Activated B cell treated with CpG ODN at 0.5 μM for 24 hours (primary cell): ENCODE measurements at regions of chr1 and their contacts with region 1.

Region 1: GRCh38 chr1:1406817-1407635 is at the start of gene MRPL20:
- DNase-seq: peak; percentile 92
- ATAC-seq: peak; percentile 93
- H3K4me3 Mint-ChIP-seq: peak within 1 kb of the TSS; percentile 92
- H3K27ac Mint-ChIP-seq: peak within 1 kb of the TSS; percentile 89
- H3K4me1 Mint-ChIP-seq: peaks cover 38% of the 10 kb centered on the region
- H3K27me3 Mint-ChIP-seq: no peaks in the 10 kb centered on the region
- CTCF ChIP-seq: no peak
- total RNA-seq, gene MRPL20: 134 and 136 TPM in 2 replicates

Region 2: GRCh38 chr1:1273512-1274298 is 133.3 kb before region 1 on chr1 and contains the start of gene UBE2J2:
- CTCF ChIA-PET with region 1: no interaction called
- POLR2A ChIA-PET with region 1: interaction called, 5 read pairs
- intact Hi-C with region 1: loop called (anchors 1 kb)
- DNase-seq: peak; percentile 82
- ATAC-seq: peak; percentile 96
- H3K4me3 Mint-ChIP-seq: peak within 1 kb of the TSS; percentile 87
- H3K27ac Mint-ChIP-seq: peak within 1 kb of the TSS; percentile 70
- H3K4me1 Mint-ChIP-seq: peaks cover 38% of the 10 kb centered on the region
- H3K27me3 Mint-ChIP-seq: no peaks in the 10 kb centered on the region
- CTCF ChIP-seq: no peak
- total RNA-seq, gene UBE2J2: 79.2 and 89.9 TPM in 2 replicates

Region 3: GRCh38 chr1:1435106-1435903 is 28.3 kb after region 1 on chr1 and contains the start of gene VWA1:
- CTCF ChIA-PET with region 1: no interaction called
- POLR2A ChIA-PET with region 1: interaction called, 3 read pairs
- intact Hi-C with region 1: loop called (anchors 2 kb)
- DNase-seq: peak; percentile 79
- ATAC-seq: peak; percentile 88
- H3K4me3 Mint-ChIP-seq: peak within 1 kb of the TSS; percentile 41
- H3K27ac Mint-ChIP-seq: no peak within 1 kb of the TSS
- H3K4me1 Mint-ChIP-seq: peaks cover 17% of the 10 kb centered on the region
- H3K27me3 Mint-ChIP-seq: peaks cover 12% of the 10 kb centered on the region
- CTCF ChIP-seq: no peak
- total RNA-seq, gene VWA1: not detected in 2 replicates

Region 4: GRCh38 chr1:1471389-1472052 is 64.5 kb after region 1 on chr1 and contains the start of gene ATAD3B:
- CTCF ChIA-PET with region 1: no interaction called
- POLR2A ChIA-PET with region 1: no interaction called
- intact Hi-C with region 1: loop called (anchors 2 kb)
- DNase-seq: peak; percentile 84
- ATAC-seq: peak; percentile 95
- H3K4me3 Mint-ChIP-seq: peak within 1 kb of the TSS; percentile 90
- H3K27ac Mint-ChIP-seq: peak within 1 kb of the TSS; percentile 82
- H3K4me1 Mint-ChIP-seq: peaks cover 25% of the 10 kb centered on the region
- H3K27me3 Mint-ChIP-seq: no peaks in the 10 kb centered on the region
- CTCF ChIP-seq: no peak
- total RNA-seq, gene ATAD3B: 47.4 and 49.5 TPM in 2 replicates

Region 5: DNA sequence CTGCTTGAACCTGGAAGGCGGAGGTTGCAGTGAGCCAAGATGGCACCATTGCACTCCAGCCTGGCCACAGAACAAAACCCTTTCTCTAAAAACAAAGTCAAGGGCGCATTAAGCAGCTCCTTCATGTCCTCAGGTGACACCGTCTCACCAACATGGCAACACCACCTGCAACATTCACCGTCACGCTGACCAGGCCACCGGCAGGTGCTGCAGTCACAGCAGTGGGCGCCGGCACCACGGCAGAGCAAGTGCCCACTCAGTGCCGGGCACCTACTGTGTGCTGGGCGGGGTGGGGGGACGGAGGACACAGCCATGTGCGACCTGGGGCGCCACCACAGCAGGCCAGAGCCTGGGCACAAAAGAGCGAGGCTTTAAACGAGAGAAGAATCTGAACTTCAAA is 76.7 kb after region 1 on chr1:
- CTCF ChIA-PET with region 1: no interaction called
- POLR2A ChIA-PET with region 1: no interaction called
- intact Hi-C with region 1: no loop called
- DNase-seq: no peak
- ATAC-seq: no peak
- H3K4me3 Mint-ChIP-seq: no peak overlapping the region
- H3K27ac Mint-ChIP-seq: no peak overlapping the region
- H3K4me1 Mint-ChIP-seq: peaks cover 2% of the 10 kb centered on the region
- H3K27me3 Mint-ChIP-seq: no peaks in the 10 kb centered on the region
- CTCF ChIP-seq: no peak